ENCODE measurements at regions of chr6 and their contacts with region 1.

Region 1: GRCh38 chr6:24431045-24431451 is 28.3 kb downstream of the MRS2 start:
- DNase-seq: peak in 4 of 5 donors; percentile 15 to 33 (median 28)
- H3K4me3 ChIP-seq: no peak overlapping the region
- H3K4me3 Mint-ChIP-seq: no peak overlapping the region
- H3K27ac ChIP-seq: no peak overlapping the region
- H3K27ac Mint-ChIP-seq: no peak overlapping the region
- H3K4me1 ChIP-seq: no peaks in the 10 kb centered on the region
- H3K4me1 Mint-ChIP-seq: peaks cover 0 to 1% (median 0%) of the 10 kb centered on the region in 4 donors
- H3K27me3 ChIP-seq: no peaks in the 10 kb centered on the region
- H3K27me3 Mint-ChIP-seq: no peaks in the 10 kb centered on the region

Region 2: DNA sequence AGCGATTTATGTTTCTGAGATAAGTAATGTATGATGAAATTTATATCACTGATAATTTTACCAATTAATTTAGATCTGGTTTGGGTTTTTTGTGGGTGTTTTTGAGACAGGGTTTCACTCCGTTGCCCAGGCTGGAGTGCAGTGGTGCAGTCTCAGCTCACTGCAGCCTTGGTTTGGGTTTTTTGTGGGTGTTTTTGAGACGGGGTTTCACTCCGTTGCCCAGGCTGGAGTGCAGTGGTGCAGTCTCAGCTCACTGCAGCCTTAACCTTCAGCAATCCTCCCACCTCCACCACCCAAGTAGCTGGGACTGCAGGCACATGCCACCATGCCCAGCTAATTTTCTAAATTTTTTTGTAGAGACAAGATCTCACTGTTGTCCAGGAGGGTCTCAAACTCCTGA is 15.3 kb before region 1 on chr6:
- CTCF ChIA-PET with region 1: interaction called, 14 read pairs
- POLR2A ChIA-PET with region 1: no interaction called
- intact Hi-C with region 1: no loop called
- DNase-seq: no peak
- H3K4me3 ChIP-seq: no peak overlapping the region
- H3K4me3 Mint-ChIP-seq: no peak overlapping the region
- H3K27ac ChIP-seq: no peak overlapping the region
- H3K27ac Mint-ChIP-seq: no peak overlapping the region
- H3K4me1 ChIP-seq: no peaks in the 10 kb centered on the region
- H3K4me1 Mint-ChIP-seq: peaks cover 0 to 1% (median 0%) of the 10 kb centered on the region in 4 donors
- H3K27me3 ChIP-seq: no peaks in the 10 kb centered on the region
- H3K27me3 Mint-ChIP-seq: no peaks in the 10 kb centered on the region

Region 3: DNA sequence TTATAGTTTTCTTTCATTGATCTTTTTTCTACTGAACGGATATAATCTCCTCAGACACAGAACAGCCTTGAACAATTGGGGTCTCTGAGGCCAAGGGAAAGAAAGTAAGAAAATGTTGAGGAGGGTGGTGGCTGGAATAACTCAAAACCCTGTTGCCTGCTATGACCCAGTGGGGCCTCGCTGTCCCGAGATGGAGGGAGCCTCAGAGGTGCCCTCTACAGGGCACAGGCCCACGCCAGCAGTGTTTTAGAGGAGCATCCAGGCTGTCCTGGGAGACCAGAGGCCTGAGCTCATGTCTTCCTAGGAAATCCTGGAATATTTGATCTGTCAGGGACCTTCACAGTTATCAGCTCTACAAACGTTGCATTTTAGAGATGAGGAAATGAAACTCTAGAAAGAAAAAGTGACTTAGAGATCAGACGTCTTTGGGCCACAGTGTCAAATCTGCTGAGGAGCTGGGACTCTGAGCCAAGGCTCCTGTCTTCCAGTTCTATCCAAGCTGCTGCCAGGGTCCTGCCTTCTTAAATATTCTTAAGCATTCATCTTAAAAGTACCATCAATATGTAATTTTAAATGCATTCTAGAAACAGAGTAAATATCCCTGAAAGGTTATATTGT is 90.0 kb after region 1 on chr6:
- CTCF ChIA-PET with region 1: interaction called, 34 read pairs
- POLR2A ChIA-PET with region 1: no interaction called
- intact Hi-C with region 1: no loop called
- DNase-seq: peak in 3 of 5 donors; percentile 10 to 13 (median 13)
- H3K4me3 ChIP-seq: no peak overlapping the region
- H3K4me3 Mint-ChIP-seq: no peak overlapping the region
- H3K27ac ChIP-seq: no peak overlapping the region
- H3K27ac Mint-ChIP-seq: no peak overlapping the region
- H3K4me1 ChIP-seq: no peaks in the 10 kb centered on the region
- H3K4me1 Mint-ChIP-seq: no peaks in the 10 kb centered on the region
- H3K27me3 ChIP-seq: no peaks in the 10 kb centered on the region
- H3K27me3 Mint-ChIP-seq: no peaks in the 10 kb centered on the region

Measured in CD4-positive, alpha-beta memory T cell (primary cell).